ENCODE measurements at regions of chr1 and their contacts with region 1.

Region 1: GRCh38 chr1:154730259-154730658 is 122.3 kb upstream of the ADAR start:
- DNase-seq: peak; percentile 93
- H3K4me3 ChIP-seq: no peak overlapping the region
- H3K27ac ChIP-seq: peak overlapping the region; percentile 93
- H3K4me1 ChIP-seq: peaks cover 49% of the 10 kb centered on the region
- H3K27me3 ChIP-seq: no peaks in the 10 kb centered on the region
- CTCF ChIP-seq: no peak
- POLR2A ChIP-seq: no peak

Region 2: DNA sequence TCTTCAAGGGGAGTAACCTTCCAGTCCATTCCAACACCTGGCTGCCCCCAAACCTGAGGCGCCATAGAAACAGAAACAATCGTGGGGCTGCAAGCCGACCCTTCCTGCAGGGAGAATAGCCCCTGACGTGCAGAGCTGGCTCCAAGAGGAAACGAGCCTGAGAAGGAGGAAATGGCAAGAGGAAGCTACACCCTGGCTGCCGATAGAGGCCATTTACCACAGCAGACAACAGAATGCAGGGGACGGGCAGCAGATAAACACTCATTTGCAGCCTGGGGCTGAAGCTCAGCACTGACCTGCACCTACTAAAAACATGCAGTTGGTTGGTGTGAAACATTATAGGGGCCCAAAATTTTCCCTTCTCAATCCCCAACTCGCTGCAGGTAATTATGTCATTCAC is 237.0 kb before region 1 on chr1:
- CTCF ChIA-PET with region 1: no interaction called
- POLR2A ChIA-PET with region 1: no interaction called
- dilution Hi-C with region 1: no loop called
- intact Hi-C with region 1: loop called (anchors 10 kb)
- DNase-seq: peak; percentile 84
- H3K4me3 ChIP-seq: peak overlapping the region in 1 of 3 experiments; percentile 3
- H3K27ac ChIP-seq: peak overlapping the region; percentile 89
- H3K4me1 ChIP-seq: peaks cover 89% of the 10 kb centered on the region
- H3K27me3 ChIP-seq: no peaks in the 10 kb centered on the region
- CTCF ChIP-seq: no peak
- POLR2A ChIP-seq: peak; percentile 75

Region 3: DNA sequence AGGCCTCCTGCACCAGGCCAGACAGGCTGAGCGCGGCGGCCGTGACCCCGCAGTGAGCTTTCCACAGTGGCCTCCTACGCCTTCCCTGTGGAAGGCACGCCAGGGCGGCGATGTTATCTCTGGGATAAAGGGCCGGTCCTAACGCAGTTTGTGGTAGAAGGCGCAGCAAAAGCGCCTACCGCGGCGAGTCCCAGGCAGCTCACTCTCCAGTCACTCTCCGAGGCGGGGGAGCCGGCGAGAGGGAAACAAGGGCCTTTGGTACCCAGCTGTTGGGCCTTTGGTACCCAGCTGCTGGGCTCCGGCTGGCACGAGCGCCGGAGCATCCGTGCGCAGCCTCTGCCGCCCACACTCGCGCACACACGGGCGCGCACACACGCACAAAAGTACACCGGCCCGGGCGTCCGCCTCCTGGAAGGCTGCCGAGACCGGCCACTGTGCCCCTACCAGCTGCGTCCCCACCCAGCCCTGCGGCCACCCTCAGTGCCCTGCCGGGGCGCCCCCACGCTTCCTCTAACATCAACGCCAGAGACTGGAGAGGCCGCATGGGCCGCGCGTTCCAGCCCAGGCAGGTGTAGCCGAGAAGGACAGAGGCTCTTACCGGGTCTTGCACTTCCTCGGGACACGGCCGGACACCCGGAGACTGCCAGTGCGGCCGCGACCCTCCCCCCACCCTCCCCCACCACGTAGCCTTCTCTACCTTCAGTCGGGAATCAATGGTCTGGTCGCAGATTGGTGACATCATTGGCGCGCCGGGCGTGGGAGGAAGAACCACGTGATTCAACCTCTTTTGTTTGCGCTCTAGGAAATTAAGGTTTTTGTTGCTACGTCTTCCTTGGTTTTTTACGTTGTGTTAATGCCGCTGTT is 102.8 kb before region 1 on chr1:
- CTCF ChIA-PET with region 1: interaction called, 3 read pairs
- POLR2A ChIA-PET with region 1: no interaction called
- dilution Hi-C with region 1: no loop called
- intact Hi-C with region 1: loop called (anchors 1 kb)
- DNase-seq: peak; percentile 89
- H3K4me3 ChIP-seq: peak overlapping the region; percentile 72 to 99 (median 73)
- H3K27ac ChIP-seq: peak overlapping the region; percentile 86
- H3K4me1 ChIP-seq: peaks cover 7% of the 10 kb centered on the region
- H3K27me3 ChIP-seq: peaks cover 3 to 13% of the 10 kb centered on the region in 2 experiments
- CTCF ChIP-seq: no peak
- POLR2A ChIP-seq: no peak

Region 4: GRCh38 chr1:154747740-154748404 is 17.6 kb after region 1 on chr1:
- CTCF ChIA-PET with region 1: interaction called, 4 read pairs
- POLR2A ChIA-PET with region 1: no interaction called
- dilution Hi-C with region 1: no loop called
- intact Hi-C with region 1: loop called (anchors 2 kb)
- DNase-seq: no peak
- H3K4me3 ChIP-seq: no peak overlapping the region
- H3K27ac ChIP-seq: no peak overlapping the region
- H3K4me1 ChIP-seq: no peaks in the 10 kb centered on the region
- H3K27me3 ChIP-seq: peaks cover 41 to 46% of the 10 kb centered on the region in 2 experiments
- CTCF ChIP-seq: no peak
- POLR2A ChIP-seq: no peak

Region 5: DNA sequence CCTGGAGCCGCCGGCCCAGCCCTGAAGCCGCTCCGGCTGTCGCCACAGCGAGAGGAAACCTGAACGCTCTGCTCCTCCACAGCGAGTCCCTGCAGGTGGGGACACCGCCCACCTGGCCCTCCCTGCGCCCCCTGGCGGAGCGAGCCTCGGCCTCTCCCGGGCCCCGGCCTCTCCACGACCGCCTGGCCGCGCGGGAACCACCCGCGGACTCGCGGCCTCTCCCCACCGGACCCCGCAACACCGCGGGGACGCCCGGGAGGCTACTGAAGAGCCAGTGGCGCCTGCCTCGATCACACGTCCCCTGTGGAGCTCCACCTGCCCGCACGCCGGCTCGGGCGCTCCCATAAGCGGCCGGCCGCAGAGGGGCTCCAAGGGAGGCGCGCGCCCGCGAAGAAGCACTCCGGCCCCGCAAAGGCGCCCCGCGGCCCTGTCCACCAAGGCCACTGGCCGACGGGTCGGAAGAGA is 30.2 kb after region 1 on chr1:
- CTCF ChIA-PET with region 1: interaction called, 19 read pairs
- POLR2A ChIA-PET with region 1: no interaction called
- dilution Hi-C with region 1: no loop called
- intact Hi-C with region 1: no loop called
- DNase-seq: peak; percentile 19
- H3K4me3 ChIP-seq: peak overlapping the region in 1 of 3 experiments; percentile 29
- H3K27ac ChIP-seq: no peak overlapping the region
- H3K4me1 ChIP-seq: peaks cover 3% of the 10 kb centered on the region
- H3K27me3 ChIP-seq: peaks cover 8 to 34% of the 10 kb centered on the region in 2 experiments
- CTCF ChIP-seq: peak; percentile 76 to 86
- POLR2A ChIP-seq: no peak